MCF 10A (cell line): ENCODE measurements at regions of chr15 and their contacts with region 1.

Region 1: GRCh38 chr15:60070838-60071493 is 66.9 kb downstream of the FOXB1 start:
- DNase-seq: peak; percentile 91
- H3K4me3 Mint-ChIP-seq: peak overlapping the region; percentile 38
- H3K27ac Mint-ChIP-seq: peak overlapping the region; percentile 75
- H3K4me1 Mint-ChIP-seq: peaks cover 18% of the 10 kb centered on the region
- H3K27me3 Mint-ChIP-seq: no peaks in the 10 kb centered on the region
- CTCF ChIP-seq: no peak

Region 2: GRCh38 chr15:59966262-59966661 is 104.7 kb before region 1 on chr15:
- CTCF ChIA-PET with region 1: no interaction called
- POLR2A ChIA-PET with region 1: no interaction called
- intact Hi-C with region 1: no loop called
- DNase-seq: no peak
- H3K4me3 Mint-ChIP-seq: no peak overlapping the region
- H3K27ac Mint-ChIP-seq: no peak overlapping the region
- H3K4me1 Mint-ChIP-seq: no peaks in the 10 kb centered on the region
- H3K27me3 Mint-ChIP-seq: no peaks in the 10 kb centered on the region
- CTCF ChIP-seq: no peak

Region 3: DNA sequence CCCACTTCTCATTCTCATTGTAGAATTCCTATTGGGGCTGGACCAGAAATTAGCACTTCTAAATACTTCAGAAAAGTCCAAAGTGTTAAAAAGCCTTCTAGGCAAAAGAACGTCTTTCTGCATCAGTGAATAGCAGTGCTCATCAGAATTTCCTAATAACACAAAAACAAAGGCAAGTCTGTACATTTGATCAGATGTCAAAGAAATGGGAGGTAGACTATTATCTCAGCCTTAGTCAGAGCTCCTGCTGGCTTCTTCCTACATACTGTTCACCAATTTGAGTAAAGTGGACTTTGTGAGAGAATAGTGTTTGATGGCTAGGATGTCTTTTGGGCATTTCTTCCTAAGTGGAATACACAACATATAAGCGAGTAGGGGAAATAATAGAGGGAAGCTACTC is 18.2 kb before region 1 on chr15:
- CTCF ChIA-PET with region 1: interaction called, 5 read pairs
- POLR2A ChIA-PET with region 1: interaction called, 24 read pairs
- intact Hi-C with region 1: no loop called
- DNase-seq: no peak
- H3K4me3 Mint-ChIP-seq: no peak overlapping the region
- H3K27ac Mint-ChIP-seq: peak overlapping the region; percentile 6
- H3K4me1 Mint-ChIP-seq: peaks cover 14% of the 10 kb centered on the region
- H3K27me3 Mint-ChIP-seq: no peaks in the 10 kb centered on the region
- CTCF ChIP-seq: no peak

Region 4: GRCh38 chr15:60059186-60059585 is 11.8 kb before region 1 on chr15:
- CTCF ChIA-PET with region 1: interaction called, 5 read pairs
- POLR2A ChIA-PET with region 1: interaction called, 10 read pairs
- intact Hi-C with region 1: no loop called
- DNase-seq: no peak
- H3K4me3 Mint-ChIP-seq: no peak overlapping the region
- H3K27ac Mint-ChIP-seq: peak overlapping the region; percentile 61
- H3K4me1 Mint-ChIP-seq: peaks cover 5% of the 10 kb centered on the region
- H3K27me3 Mint-ChIP-seq: no peaks in the 10 kb centered on the region
- CTCF ChIP-seq: no peak